Thyroid gland (tissue), 4 donors: ENCODE measurements at regions of chr17 and their contacts with region 1.

Region 1: DNA sequence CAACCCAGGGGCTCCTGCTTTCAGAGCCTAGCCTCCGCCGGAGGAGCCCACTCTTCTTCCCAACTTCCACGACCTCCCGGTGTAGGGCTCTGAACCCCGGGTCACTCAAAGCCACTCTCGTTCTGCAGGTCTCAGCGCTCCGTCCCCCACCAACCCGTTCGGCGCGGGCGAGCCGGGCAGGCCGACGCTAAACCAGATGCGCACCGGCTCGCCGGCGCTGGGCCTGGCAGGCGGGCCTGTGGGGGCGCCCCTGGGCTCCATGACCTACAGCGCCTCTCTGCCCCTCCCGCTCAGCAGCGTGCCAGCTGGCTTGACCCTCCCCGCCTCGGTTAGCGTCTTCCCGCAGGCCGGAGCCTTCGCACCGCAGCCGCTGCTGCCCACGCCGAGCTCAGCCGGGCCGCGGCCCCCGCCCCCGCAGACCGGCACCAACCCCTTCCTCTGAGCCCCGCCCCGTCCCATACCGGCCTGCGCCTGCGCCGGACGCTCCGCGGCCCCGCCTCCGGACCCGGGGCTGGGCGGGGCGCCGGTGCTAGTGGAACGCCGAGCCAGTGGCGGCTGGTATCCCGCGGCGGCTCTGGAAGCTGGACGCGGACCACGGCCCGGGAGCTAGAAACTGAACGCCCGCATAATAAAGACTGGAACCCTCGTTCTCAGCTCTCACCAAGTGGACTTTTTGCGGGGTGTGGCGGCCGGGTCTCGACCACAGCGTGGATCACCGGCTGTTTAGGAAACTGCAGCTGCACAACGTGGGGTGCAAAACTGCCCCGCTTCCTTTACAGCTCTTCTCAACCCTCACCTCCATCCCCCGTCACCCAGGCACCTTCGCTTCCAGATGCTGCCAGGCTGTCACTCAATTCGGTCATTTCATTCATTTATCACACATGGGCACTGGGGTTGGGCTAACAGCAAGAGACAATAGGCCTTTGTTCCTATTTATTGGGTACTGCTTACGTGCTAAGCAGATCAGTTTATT is 5.0 kb upstream of the SPATA20 start:
- DNase-seq: peak; percentile 88
- H3K4me3 ChIP-seq: peak overlapping the region; percentile 9 to 39 (median 19)
- H3K27ac ChIP-seq: peak overlapping the region; percentile 25 to 73 (median 70)
- H3K4me1 ChIP-seq: peaks cover 15 to 19% of the 10 kb centered on the region in 2 donors
- H3K27me3 ChIP-seq: no peaks in the 10 kb centered on the region
- CTCF ChIP-seq: no peak
- POLR2A ChIP-seq: peak in 1 of 2 donors; percentile 84

Region 2: DNA sequence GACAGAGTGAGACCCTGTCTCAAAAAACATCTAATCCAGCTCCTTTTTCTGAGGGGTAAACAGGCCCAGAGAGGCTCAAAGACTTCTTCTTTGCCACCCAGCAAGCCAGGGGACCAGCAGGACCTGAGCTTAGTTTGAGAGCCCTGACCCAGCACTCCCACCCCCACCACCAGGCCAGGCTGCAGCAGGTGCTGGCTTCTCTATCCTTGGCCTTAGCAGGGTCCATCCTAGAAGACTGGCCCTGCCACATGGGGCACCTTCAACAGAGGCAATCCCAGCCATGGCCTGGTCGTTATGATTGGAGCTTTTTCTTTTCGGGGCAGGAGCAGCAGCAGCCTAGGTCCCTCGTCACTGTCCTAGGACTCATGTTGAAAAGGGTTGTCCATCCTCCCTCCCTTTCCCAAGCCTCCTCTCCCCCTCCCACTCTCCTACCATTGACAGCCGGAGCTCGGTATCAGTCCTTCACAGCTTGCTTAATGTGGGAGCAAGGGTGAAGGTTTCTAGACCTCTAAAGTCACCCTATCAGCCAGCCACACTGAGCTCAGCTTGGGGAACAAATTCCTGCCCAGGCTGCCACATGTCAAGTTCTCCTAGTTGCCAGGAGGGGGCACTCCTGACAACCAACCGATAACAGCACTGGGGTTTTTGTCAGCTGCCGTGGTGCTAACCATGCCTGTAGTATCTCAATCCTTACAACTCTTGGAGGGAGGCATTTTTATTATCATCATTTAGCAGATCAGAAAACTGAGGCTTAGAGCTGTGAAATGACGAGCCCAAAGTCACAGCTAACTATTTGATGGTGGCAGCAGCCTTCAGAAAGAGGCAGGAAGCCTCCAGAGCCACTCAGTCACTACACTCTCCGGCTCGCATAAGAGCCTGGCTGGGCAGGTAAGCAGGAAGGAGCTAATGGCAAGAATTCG is 180.2 kb before region 1 on chr17:
- intact Hi-C with region 1: no loop called
- DNase-seq: peak; percentile 59 to 64
- H3K4me3 ChIP-seq: no peak overlapping the region
- H3K27ac ChIP-seq: no peak overlapping the region
- H3K4me1 ChIP-seq: peaks cover 0 to 6% of the 10 kb centered on the region in 2 donors
- H3K27me3 ChIP-seq: no peaks in the 10 kb centered on the region
- CTCF ChIP-seq: peak in 5 of 6 experiments; percentile 53 to 77 (median 64)
- POLR2A ChIP-seq: no peak

Region 3: DNA sequence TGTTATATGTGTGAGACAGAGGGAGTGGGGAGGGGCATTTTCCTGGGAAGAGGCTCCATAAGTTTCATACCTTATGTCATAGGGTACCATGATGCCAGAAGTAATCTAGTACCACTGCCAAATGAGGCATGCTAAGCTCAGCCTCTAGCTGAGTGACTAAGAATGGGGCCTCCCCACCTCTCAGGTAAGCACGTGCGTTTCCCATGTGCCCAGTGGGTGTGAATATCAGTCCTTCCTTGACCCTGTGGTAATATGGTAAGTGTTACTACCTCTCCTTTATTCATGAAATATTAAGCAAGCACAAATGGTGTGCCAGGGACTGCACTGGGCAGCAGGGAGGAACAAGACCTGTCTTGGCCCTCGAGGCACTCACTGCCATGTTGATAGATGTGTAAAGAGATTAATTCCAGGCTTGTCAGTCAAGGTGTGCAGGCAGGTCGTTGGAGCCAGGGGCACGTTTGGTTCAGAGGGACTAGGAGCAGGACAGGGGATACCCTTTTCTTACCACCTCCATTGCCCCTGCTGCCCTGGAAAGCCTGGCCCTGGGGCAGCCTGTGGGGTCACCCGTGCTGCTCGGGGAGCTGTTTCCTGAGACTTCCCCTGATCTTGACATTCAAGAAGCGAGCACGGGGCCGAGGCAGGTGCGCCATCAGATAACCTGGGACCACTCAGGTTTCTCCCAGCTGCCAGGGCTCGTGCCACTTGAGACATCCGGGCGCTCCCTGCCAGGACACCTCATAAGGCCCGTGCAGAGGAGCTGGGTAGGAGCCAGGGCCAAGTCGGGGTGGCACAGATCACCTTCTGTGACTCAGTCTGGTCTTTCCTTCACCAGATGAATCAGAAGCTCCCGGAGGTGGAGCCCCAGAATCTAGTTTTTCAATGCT is 54.5 kb before region 1 on chr17:
- intact Hi-C with region 1: loop called (anchors 5 kb)
- DNase-seq: peak; percentile 41 to 69
- H3K4me3 ChIP-seq: no peak overlapping the region
- H3K27ac ChIP-seq: peak overlapping the region in 1 of 3 donors; percentile 7
- H3K4me1 ChIP-seq: peaks cover 26 to 47% of the 10 kb centered on the region in 2 donors
- H3K27me3 ChIP-seq: no peaks in the 10 kb centered on the region
- CTCF ChIP-seq: no peak
- POLR2A ChIP-seq: no peak